Sigmoid colon (tissue), 7 donors: ENCODE measurements at regions of chr1 and their contacts with region 1.

Region 1: DNA sequence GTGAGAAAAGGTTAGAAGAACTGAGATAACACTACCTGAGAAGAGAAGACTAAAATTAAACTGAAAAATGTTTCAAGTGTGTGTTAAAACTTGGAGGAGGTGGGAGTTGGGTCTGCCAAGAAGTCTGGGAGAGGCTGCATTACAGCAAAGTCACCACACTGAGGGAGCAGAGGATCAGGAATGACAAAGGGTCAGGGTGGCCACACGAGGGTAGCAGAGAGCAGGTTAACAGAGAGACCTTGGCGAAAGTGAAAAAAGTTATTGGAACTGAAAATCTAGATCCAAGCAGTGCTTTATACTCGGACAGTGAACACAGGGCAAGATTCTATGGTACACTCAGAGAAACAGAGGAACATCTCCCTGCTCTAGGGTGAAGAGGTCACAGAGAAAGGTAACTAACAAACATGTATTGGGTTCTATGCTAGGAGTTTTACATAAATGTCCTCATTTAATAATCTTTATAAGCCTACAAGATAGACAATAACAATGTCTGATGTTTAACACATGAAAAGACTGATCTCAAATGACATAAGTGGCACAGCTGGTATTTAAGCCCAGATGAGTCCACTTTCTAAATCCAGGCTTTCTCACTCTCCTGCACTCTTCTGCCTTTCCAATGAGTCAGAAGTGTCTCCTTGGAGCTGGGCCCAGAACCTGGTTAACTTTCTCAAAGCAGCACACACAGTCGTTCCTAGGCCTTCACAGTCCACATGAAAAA is 10.3 kb upstream of the CADM3 start:
- DNase-seq: peak; percentile 88
- H3K4me3 ChIP-seq: no peak overlapping the region
- H3K27ac ChIP-seq: peak overlapping the region; percentile 63 to 78 (median 74)
- H3K4me1 ChIP-seq: peaks cover 0 to 14% (median 10%) of the 10 kb centered on the region in 4 donors
- H3K27me3 ChIP-seq: peaks cover 0 to 6% (median 0%) of the 10 kb centered on the region in 3 donors
- CTCF ChIP-seq: peak; percentile 93 to 99 (median 98)
- EP300 ChIP-seq: no peak
- POLR2A ChIP-seq: no peak

Region 2: GRCh38 chr1:159197561-159198557 is 36.7 kb after region 1 on chr1:
- intact Hi-C with region 1: loop called (anchors 1 kb)
- DNase-seq: peak; percentile 82
- H3K4me3 ChIP-seq: no peak overlapping the region
- H3K27ac ChIP-seq: no peak overlapping the region
- H3K4me1 ChIP-seq: no peaks in the 10 kb centered on the region
- H3K27me3 ChIP-seq: peaks cover 0 to 9% (median 0%) of the 10 kb centered on the region in 3 donors
- CTCF ChIP-seq: peak; percentile 64 to 91 (median 80)
- EP300 ChIP-seq: no peak
- POLR2A ChIP-seq: no peak

Region 3: GRCh38 chr1:159214149-159214760 is 53.1 kb after region 1 on chr1:
- intact Hi-C with region 1: loop called (anchors 1 kb)
- DNase-seq: no peak
- H3K4me3 ChIP-seq: no peak overlapping the region
- H3K27ac ChIP-seq: no peak overlapping the region
- H3K4me1 ChIP-seq: no peaks in the 10 kb centered on the region
- H3K27me3 ChIP-seq: peaks cover 0 to 50% (median 0%) of the 10 kb centered on the region in 3 donors
- CTCF ChIP-seq: peak in 3 of 4 experiments; percentile 48 to 85 (median 81)
- EP300 ChIP-seq: no peak
- POLR2A ChIP-seq: no peak